ENCODE measurements at regions of chrX and their contacts with region 1.

Region 1: DNA sequence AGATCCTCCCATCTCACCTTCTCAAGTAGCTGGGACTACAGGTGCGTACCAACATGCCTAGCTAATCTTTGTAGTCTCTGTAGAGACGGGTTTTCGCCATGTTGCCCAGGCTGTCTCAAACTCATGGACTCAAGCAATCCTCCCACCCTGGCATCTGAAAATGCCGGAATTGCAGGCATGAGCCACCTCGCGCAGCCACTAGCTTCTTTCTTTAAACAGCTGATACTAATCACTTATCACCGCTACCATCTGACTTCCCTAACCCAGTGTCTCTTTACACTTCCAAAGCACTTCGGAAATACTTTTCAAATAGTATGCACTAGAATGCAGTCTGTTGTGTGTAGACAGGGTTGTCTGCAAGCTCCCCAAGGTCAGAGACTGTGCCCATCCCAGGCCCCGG is 14.9 kb downstream of the CTPS2 start:
- DNase-seq: no peak
- ATAC-seq: no peak
- H3K4me3 ChIP-seq: no peak overlapping the region
- H3K4me3 Mint-ChIP-seq: no peak overlapping the region
- H3K27ac ChIP-seq: no peak overlapping the region
- H3K27ac Mint-ChIP-seq: no peak overlapping the region
- H3K4me1 ChIP-seq: no peaks in the 10 kb centered on the region
- H3K4me1 Mint-ChIP-seq: no peaks in the 10 kb centered on the region
- H3K27me3 ChIP-seq: no peaks in the 10 kb centered on the region
- H3K27me3 Mint-ChIP-seq: peaks cover 0 to 3% of the 10 kb centered on the region in 2 donors

Region 2: GRCh38 chrX:16670998-16671397 is 26.5 kb before region 1 on chrX:
- CTCF ChIA-PET with region 1: interaction called in 1 of 2 experiments, 17 read pairs
- POLR2A ChIA-PET with region 1: no interaction called
- DNase-seq: peak in 20 of 35 experiments; percentile 0 to 57 (median 9)
- ATAC-seq: peak in 2 of 4 experiments; percentile 35 to 52
- H3K4me3 ChIP-seq: no peak overlapping the region
- H3K4me3 Mint-ChIP-seq: no peak overlapping the region
- H3K27ac ChIP-seq: no peak overlapping the region
- H3K27ac Mint-ChIP-seq: no peak overlapping the region
- H3K4me1 ChIP-seq: no peaks in the 10 kb centered on the region
- H3K4me1 Mint-ChIP-seq: peaks cover 0 to 2% (median 0%) of the 10 kb centered on the region in 3 donors
- H3K27me3 ChIP-seq: no peaks in the 10 kb centered on the region
- H3K27me3 Mint-ChIP-seq: no peaks in the 10 kb centered on the region

Region 3: DNA sequence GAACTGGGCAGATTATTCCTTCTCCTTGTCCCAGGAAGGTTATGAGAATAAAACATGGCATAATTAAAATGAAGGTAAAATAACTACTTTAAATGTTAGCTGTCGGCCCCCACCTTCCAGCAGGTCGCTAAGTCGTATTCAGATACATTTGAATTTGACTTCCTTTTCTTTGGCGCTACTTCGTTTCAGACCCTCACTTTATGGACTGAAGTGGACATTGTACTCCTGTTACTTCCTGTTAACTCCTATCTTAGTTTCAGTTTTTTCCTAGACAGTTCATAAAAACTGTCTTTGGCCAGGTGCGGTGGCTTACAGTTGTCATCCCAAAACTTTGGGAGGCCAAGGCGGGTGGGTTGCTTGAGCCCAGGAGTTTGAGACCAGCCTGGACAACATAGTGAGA is 27.5 kb after region 1 on chrX:
- CTCF ChIA-PET with region 1: no interaction called
- POLR2A ChIA-PET with region 1: interaction called in 1 of 2 experiments, 19 read pairs
- DNase-seq: no peak
- ATAC-seq: no peak
- H3K4me3 ChIP-seq: no peak overlapping the region
- H3K4me3 Mint-ChIP-seq: no peak overlapping the region
- H3K27ac ChIP-seq: no peak overlapping the region
- H3K27ac Mint-ChIP-seq: no peak overlapping the region
- H3K4me1 ChIP-seq: peaks cover 3 to 18% of the 10 kb centered on the region in 2 experiments
- H3K4me1 Mint-ChIP-seq: peaks cover 42 to 54% (median 48%) of the 10 kb centered on the region in 3 donors
- H3K27me3 ChIP-seq: no peaks in the 10 kb centered on the region
- H3K27me3 Mint-ChIP-seq: no peaks in the 10 kb centered on the region